Common myeloid progenitor, CD34-positive (primary cell): ENCODE measurements at regions of chr3 and their contacts with region 1.

Region 1: GRCh38 chr3:132399054-132399929 is 18.0 kb upstream of the DNAJC13 start:
- DNase-seq: peak; percentile 57 to 77 (median 69)
- H3K4me3 ChIP-seq: no peak overlapping the region
- H3K27ac ChIP-seq: no peak overlapping the region
- H3K4me1 ChIP-seq: peaks cover 0 to 4% (median 1%) of the 10 kb centered on the region in 4 experiments
- H3K27me3 ChIP-seq: no peaks in the 10 kb centered on the region

Region 2: GRCh38 chr3:132253262-132253878 is 145.9 kb before region 1 on chr3:
- CTCF ChIA-PET with region 1: interaction called, 34 read pairs
- POLR2A ChIA-PET with region 1: no interaction called
- DNase-seq: peak; percentile 67 to 87 (median 81)
- H3K4me3 ChIP-seq: no peak overlapping the region
- H3K27ac ChIP-seq: no peak overlapping the region
- H3K4me1 ChIP-seq: no peaks in the 10 kb centered on the region
- H3K27me3 ChIP-seq: no peaks in the 10 kb centered on the region

Region 3: DNA sequence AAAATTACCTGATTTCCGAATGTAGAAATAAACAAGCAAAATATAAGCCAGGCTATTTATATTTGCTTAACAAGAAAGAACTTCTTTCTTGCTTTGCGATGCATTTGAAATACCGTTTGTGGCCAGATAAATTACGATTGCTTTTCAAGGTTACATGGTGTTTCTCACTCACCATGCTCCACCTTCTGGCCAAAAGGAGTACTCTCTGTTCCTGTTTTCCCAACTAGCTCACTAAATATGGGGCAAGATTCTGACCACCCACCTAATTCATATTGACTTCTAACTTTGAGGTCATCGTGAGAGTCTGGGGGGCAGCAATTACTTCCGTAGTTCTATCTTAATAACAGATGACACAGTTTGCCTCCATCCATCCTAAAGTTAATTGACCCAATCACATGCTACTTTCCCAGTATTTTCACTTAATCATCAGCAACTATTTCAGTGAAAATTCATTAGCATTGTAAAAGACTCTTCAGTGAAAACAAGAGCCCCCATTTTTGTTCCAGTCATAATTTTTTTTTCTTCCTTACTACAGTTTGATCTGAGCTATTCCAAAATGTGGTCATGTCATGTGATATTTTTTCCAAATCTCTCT is 56.2 kb before region 1 on chr3:
- CTCF ChIA-PET with region 1: interaction called, 137 read pairs
- POLR2A ChIA-PET with region 1: no interaction called
- DNase-seq: peak; percentile 73 to 82 (median 77)
- H3K4me3 ChIP-seq: peak overlapping the region in 4 of 7 experiments; percentile 15 to 58 (median 53)
- H3K27ac ChIP-seq: no peak overlapping the region
- H3K4me1 ChIP-seq: peaks cover 0 to 15% (median 9%) of the 10 kb centered on the region in 4 experiments
- H3K27me3 ChIP-seq: no peaks in the 10 kb centered on the region

Region 4: GRCh38 chr3:132352541-132353143 is 46.6 kb before region 1 on chr3:
- CTCF ChIA-PET with region 1: interaction called, 137 read pairs
- POLR2A ChIA-PET with region 1: no interaction called
- DNase-seq: peak; percentile 71 to 82 (median 78)
- H3K4me3 ChIP-seq: no peak overlapping the region
- H3K27ac ChIP-seq: no peak overlapping the region
- H3K4me1 ChIP-seq: no peaks in the 10 kb centered on the region
- H3K27me3 ChIP-seq: no peaks in the 10 kb centered on the region